Prostate gland (tissue), 2 donors: ENCODE measurements at regions of chr18 and their contacts with region 1.

Region 1: DNA sequence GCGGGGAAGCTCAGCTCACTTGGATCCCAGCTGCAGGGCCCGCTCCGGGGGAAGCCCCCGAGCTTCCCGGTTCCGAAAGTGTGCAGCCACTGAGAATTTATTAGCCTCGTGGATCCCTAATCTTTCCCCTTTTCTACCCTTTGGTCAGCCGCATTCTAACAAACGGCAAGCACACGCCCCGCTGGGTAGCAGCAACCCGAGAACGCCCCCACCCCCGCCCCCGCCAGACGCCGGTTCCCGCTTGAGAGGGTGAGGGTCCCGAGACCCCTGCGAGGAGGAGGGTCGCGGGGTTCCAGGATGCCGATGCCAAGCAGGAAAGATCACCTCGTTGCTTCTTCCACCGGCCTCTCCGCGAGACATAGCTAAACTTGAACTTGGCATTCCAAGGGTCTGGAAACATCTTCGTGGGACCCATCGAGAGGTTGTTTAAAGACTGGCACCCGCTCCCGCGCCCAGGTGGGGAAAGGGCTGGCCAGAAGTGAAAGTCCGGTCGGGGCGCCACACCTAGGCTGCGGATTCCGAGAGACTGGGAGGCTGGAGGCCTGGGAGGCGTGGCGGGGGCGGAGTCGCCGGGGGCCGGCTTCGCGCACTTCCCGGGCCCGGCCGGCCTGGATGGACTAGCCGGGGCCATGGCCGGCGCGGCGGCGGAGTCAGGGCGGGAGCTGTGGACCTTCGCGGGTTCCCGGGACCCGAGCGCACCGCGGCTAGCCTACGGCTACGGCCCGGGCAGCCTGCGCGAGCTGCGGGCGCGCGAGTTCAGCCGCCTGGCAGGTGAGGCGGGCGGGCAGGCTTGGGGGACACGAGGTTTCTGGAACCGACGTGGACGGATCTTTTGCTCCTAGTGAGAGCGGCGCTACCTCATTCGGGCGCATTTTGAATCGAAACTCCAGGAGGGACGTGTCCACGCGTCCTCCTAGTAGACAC is at the start of gene MOCOS:
- DNase-seq: peak; percentile 72
- H3K4me3 ChIP-seq: peak within 1 kb of the TSS; percentile 64
- H3K27ac ChIP-seq: peak within 1 kb of the TSS; percentile 59 to 60
- H3K4me1 ChIP-seq: no peaks in the 10 kb centered on the region
- H3K27me3 ChIP-seq: no peaks in the 10 kb centered on the region
- CTCF ChIP-seq: no peak
- POLR2A ChIP-seq: peak; percentile 69
- total RNA-seq, gene MOCOS: 2.5 to 3.9 TPM

Region 2: GRCh38 chr18:36129300-36130038 is 57.7 kb before region 1 on chr18 and contains the starts of genes ELP2 and SLC39A6:
- intact Hi-C with region 1: loop called (anchors 5 kb)
- DNase-seq: peak; percentile 97
- H3K4me3 ChIP-seq: peak within 1 kb of the TSS; percentile 69 to 88
- H3K27ac ChIP-seq: peak within 1 kb of the TSS; percentile 100
- H3K4me1 ChIP-seq: no peaks in the 10 kb centered on the region
- H3K27me3 ChIP-seq: no peaks in the 10 kb centered on the region
- CTCF ChIP-seq: peak in 2 of 4 experiments; percentile 10 to 23
- POLR2A ChIP-seq: peak; percentile 70
- total RNA-seq, gene ELP2: 49.7 to 80.4 TPM
- total RNA-seq, gene SLC39A6: 112 to 379 TPM

Region 3: GRCh38 chr18:36672437-36673344 is 485.5 kb after region 1 on chr18:
- intact Hi-C with region 1: loop called (anchors 10 kb)
- DNase-seq: peak; percentile 86
- H3K4me3 ChIP-seq: no peak overlapping the region
- H3K27ac ChIP-seq: peak overlapping the region; percentile 37 to 68
- H3K4me1 ChIP-seq: no peaks in the 10 kb centered on the region
- H3K27me3 ChIP-seq: no peaks in the 10 kb centered on the region
- CTCF ChIP-seq: no peak
- POLR2A ChIP-seq: no peak